Ascending aorta (tissue), 2 donors: ENCODE measurements at regions of chr15 and their contacts with region 1.

Region 1: DNA sequence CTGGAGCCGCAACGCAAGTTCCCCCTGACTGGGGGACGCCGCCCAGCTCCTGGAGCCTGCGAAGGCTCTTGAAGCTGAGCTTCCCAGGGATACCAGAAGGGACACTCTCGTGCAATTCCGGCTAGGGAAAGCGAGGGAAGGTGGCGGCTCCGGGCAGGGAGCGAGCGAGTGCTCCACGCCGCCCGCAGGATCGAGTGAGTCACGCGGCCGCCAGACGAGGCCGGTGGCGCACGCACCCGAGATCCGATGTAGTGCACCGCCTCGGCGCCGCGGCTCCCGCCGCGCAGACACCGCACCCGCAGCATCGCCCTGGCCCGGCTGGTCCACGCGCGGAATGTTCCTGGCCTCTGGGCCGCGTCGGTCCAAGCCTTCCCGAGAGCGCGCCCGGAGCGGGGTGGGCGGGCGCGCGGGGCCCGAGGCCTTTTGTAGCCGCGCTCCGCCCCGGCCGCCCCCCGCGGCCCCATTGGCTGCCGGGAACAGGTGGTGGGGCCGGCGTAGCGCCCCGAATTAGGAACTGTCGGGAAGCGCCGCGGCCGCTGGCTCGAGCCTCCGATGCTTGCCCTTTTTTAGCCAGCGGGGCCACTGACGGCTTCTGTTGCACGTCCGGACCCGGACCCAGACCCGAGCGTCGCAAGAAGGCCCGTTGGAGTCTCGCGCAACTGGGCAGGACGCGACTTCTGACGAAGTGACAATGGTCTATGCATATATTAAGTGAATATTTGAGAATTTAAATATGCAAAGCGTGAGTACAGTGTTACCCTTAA is at the start of gene GATM:
- DNase-seq: peak; percentile 43 to 89
- H3K4me3 ChIP-seq: peak within 1 kb of the TSS; percentile 61 to 72
- H3K27ac ChIP-seq: peak within 1 kb of the TSS; percentile 75 to 77
- H3K4me1 ChIP-seq: peaks cover 3 to 5% of the 10 kb centered on the region in 2 donors
- H3K27me3 ChIP-seq: no peaks in the 10 kb centered on the region
- CTCF ChIP-seq: peak; percentile 26 to 61 (median 49)
- total RNA-seq, gene GATM: 6.1 TPM

Region 2: DNA sequence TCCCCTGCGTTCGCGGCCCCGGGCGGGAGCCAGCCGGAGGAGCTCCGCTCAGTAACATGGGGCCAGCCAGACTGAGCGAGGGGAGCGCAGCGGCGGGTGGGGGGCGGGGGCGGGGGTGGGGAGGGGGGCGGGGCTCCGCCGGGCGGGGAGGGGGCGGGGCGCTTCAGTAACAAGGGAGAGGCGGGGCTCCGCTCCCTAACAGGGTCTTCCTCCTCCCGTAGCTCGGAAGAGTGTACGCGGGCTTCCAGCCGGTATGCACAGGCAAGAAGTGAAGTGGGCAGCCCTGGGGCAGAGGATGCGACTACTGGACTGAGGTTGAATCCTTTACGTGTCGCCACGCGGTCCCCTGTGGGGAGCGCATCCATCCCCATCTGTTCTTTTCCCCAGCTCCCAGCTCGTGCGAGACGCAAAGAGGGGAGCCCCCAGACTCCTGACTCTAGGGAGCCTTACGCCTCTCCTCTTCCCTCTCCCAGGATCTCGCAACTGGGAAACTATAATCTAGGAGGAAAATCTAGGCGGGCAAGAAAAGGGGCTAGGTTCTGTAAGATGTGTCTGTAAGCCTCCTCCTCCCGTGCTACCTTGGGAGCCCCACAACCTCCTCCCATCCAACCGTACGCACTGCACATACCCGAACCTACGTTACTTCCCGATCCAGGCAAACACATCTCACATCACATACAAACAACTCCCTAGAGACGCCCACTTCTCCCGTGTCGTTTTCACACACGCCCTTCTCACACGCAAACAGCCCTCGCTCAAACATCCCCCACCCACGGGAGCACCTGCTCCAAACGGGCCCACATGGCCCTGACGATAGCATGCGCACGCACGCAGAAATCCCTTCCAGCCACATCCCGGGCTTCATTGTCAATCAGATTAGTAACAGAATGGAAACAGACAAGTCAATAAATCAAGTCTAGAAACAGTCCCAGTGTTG is 190.2 kb before region 1 on chr15 and contains the start of gene SHF:
- intact Hi-C with region 1: loop called (anchors 5 kb)
- DNase-seq: peak in 1 of 2 donors; percentile 86
- H3K4me3 ChIP-seq: peak within 1 kb of the TSS; percentile 79 to 94
- H3K27ac ChIP-seq: peak within 1 kb of the TSS; percentile 89 to 98
- H3K4me1 ChIP-seq: peaks cover 0 to 5% of the 10 kb centered on the region in 2 donors
- H3K27me3 ChIP-seq: no peaks in the 10 kb centered on the region
- CTCF ChIP-seq: no peak
- total RNA-seq, gene SHF: 75.0 TPM

Region 3: DNA sequence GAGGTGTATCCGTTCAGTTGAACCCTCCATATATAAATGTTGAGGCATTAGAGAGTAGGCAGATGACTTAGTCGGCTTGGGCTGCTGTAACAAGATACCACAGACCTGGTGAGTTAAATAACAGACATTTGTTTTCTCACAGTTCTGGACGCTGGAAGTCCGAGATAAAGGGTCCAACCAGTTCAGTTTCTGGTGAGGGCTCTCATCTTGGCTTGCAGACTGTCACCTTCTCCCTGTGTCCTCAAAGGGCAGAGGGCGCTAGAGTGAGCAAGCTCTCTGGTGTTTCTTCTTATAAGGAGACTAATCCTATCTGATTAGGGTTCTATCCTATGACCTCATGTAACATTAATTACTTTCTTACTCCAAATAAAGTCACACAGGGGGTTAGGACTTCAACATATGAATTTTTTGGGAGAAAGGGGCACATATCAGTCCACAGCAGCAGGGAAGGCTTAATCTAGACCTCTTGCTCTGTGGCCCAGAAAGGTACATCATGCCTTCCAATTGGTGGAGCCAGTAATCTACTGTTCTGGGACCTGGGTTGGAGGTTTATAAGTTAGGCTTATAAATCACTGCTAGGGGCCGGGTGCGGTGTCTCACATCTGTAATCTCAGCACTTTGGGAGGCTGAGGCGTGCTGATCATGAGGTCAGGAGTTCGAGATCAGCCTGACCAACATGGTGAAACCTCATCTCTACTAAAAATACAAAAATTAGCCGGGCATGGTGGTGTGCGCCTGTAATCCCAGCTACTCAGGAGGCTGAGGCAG is 152.6 kb before region 1 on chr15:
- intact Hi-C with region 1: no loop called
- DNase-seq: no peak
- H3K4me3 ChIP-seq: no peak overlapping the region
- H3K27ac ChIP-seq: no peak overlapping the region
- H3K4me1 ChIP-seq: no peaks in the 10 kb centered on the region
- H3K27me3 ChIP-seq: no peaks in the 10 kb centered on the region
- CTCF ChIP-seq: no peak

Region 4: GRCh38 chr15:45279024-45279698 is 99.2 kb before region 1 on chr15:
- intact Hi-C with region 1: loop called (anchors 2 kb)
- DNase-seq: peak; percentile 91 to 99
- H3K4me3 ChIP-seq: peak overlapping the region; percentile 64 to 71
- H3K27ac ChIP-seq: peak overlapping the region; percentile 82 to 86
- H3K4me1 ChIP-seq: peaks cover 0 to 11% of the 10 kb centered on the region in 2 donors
- H3K27me3 ChIP-seq: no peaks in the 10 kb centered on the region
- CTCF ChIP-seq: no peak

Region 5: DNA sequence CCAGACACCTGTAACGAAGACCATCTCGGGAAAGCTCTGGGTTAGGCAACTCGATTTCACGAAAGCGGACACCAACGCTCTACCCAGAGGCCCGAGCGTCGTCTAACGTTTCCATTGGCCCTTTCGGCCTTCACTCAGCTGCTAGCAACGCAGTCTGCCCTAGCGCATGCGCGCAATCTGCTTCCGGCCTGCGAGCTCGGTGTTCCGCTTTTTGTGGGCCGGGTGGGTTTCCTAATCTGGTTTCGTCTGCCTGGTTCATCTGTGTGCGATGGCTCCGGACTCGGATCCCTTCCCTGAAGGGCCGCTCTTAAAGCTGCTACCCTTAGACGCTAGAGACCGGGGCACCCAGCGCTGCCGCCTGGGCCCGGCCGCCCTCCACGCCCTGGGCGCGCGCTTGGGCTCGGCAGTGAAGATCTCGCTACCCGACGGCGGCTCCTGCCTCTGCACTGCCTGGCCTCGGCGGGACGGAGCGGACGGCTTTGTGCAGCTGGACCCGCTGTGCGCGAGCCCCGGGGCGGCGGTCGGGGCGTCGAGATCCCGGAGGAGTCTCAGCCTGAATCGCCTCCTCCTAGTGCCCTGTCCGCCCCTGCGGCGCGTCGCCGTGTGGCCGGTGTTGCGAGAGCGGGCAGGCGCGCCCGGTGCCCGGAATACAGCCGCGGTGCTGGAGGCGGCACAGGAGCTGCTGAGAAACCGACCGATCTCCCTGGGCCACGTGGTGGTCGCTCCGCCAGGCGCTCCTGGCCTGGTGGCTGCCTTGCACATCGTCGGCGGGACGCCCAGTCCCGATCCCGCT is 24.0 kb after region 1 on chr15:
- intact Hi-C with region 1: loop called (anchors 1 kb)
- DNase-seq: peak; percentile 80 to 97
- H3K4me3 ChIP-seq: peak overlapping the region; percentile 92 to 94
- H3K27ac ChIP-seq: peak overlapping the region; percentile 85 to 92
- H3K4me1 ChIP-seq: peaks cover 3 to 18% of the 10 kb centered on the region in 2 donors
- H3K27me3 ChIP-seq: no peaks in the 10 kb centered on the region
- CTCF ChIP-seq: peak in 1 of 3 experiments; percentile 14